Aorta (tissue), 5 donors: ENCODE measurements at regions of chr1 and their contacts with region 1.

Region 1: GRCh38 chr1:27392096-27392777 is at the start of gene GPR3:
- DNase-seq: peak; percentile 92 to 97
- ATAC-seq: peak; percentile 93
- H3K4me3 ChIP-seq: no peak within 1 kb of the TSS
- H3K27ac ChIP-seq: no peak within 1 kb of the TSS
- H3K4me1 ChIP-seq: no peaks in the 10 kb centered on the region
- H3K27me3 ChIP-seq: no peaks in the 10 kb centered on the region
- total RNA-seq, gene GPR3: 0.68 to 0.93 TPM

Region 2: DNA sequence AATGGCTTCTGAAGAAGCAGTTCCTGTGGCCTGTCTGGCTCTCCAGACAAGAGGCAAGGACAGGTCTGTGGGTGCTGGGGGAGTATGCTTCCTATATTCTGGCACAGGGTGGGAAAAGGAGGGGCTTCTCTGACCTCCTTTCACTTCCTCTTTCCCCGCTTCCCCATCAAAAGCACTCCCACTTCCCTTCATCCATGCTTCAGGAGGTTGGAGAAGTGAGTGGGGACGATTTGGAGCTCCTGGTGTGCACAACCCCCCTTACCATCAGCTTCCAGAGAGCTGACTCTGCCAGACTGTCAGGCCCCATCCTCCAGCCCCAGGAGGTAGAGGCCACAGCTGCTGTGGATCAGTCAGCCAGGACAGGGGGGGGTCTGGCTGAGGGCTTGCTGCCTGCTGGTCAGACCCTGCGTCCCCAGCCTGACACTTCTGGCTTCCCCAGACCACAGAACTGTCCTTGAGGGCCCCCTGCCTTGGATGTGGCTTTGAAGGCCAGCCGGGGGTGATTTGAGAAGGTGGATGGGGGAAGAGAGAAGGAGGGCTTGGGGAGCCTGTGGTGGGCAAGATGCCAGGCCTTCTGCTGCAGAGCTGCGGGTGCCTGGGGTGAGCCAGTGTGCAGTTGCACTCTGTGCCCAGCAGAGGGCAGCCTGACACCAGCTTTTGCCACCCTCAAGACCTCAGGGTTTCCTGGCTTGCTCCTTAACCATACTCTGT is 91.7 kb before region 1 on chr1:
- intact Hi-C with region 1: loop called (anchors 2 kb)
- DNase-seq: peak; percentile 88 to 91
- ATAC-seq: peak; percentile 93
- H3K4me3 ChIP-seq: no peak overlapping the region
- H3K27ac ChIP-seq: no peak overlapping the region
- H3K4me1 ChIP-seq: no peaks in the 10 kb centered on the region
- H3K27me3 ChIP-seq: no peaks in the 10 kb centered on the region

Region 3: DNA sequence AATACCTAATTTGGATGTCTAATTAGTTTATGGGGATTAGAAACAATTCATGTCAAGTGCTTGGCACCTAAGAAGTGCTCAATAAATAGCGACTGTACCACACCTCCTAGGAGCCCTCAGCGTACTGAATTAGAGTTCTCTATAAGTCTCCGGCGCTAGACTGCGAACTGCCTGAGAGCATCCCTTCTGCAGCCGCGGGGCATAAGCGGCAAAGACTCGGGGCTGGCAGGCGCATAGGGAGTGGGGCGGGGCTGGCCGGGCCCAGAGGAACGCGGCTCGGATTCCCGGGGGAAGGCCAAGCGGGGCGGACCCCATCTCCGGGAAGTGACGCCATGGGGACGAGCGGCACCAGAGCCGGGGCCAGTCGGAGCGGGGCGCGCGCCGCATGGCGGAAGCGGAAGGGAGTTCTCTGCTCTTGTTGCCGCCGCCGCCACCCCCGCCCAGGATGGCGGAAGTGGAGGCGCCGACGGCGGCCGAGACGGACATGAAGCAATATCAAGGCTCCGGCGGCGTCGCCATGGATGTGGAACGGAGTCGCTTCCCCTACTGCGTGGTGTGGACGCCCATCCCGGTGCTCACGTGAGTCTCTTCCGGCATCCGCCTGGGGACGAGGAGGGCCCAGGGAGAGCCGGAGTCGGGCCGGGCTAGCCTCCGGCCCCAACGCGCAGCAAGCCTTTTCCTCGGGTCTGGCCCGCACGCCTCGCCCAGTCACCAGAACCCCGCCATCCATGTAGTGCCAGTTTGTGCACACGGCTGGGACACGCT is 70.2 kb before region 1 on chr1 and contains the start of gene TMEM222:
- intact Hi-C with region 1: no loop called
- DNase-seq: peak; percentile 99 to 100
- ATAC-seq: peak; percentile 100
- H3K4me3 ChIP-seq: peak within 1 kb of the TSS; percentile 55 to 98
- H3K27ac ChIP-seq: peak within 1 kb of the TSS; percentile 28 to 50
- H3K4me1 ChIP-seq: no peaks in the 10 kb centered on the region
- H3K27me3 ChIP-seq: no peaks in the 10 kb centered on the region
- total RNA-seq, gene TMEM222: 27.4 to 32.4 TPM

Region 4: DNA sequence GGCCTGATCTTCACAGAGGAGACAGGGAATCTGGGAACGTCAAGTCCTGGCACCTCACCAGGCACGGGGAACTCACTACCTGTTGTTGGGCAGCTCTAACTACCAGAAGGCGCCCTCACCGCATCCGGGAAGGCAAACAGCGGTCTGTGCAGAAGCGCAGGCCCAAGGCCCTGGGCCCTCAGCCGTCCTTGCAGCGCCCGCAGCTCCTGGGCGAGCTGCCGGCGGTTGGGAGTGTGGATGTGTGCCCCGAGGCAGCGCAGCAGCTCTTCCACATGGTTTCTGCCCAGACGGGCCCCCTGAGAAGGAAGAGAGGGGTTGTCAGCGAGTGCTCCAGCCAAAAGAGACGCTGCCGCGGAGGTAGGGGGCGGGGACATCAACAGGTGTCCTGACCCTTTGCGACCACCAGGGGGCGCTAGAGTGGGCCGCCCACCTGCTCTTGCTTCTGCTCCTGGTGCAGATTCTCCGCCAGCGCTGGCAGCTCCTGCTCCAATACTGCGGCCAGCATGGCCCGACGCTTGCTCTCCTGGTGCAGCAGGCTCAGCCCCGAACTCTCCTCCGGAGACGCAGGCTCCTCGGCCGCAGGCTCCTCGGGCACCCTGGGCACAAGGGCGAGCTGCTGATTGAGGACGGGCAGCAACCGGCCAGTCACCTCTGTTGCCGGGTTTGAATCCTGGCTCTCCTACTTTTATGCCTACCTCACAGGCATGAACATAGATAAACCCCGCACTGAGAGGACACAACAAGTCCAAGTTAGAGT is 34.8 kb before region 1 on chr1:
- intact Hi-C with region 1: loop called (anchors 2 kb)
- DNase-seq: peak; percentile 80 to 92
- ATAC-seq: peak; percentile 85
- H3K4me3 ChIP-seq: no peak overlapping the region
- H3K27ac ChIP-seq: no peak overlapping the region
- H3K4me1 ChIP-seq: no peaks in the 10 kb centered on the region
- H3K27me3 ChIP-seq: no peaks in the 10 kb centered on the region

Region 5: GRCh38 chr1:27568300-27569087 is 176.3 kb after region 1 on chr1:
- intact Hi-C with region 1: no loop called
- DNase-seq: peak; percentile 96 to 98
- ATAC-seq: peak; percentile 87
- H3K4me3 ChIP-seq: no peak overlapping the region
- H3K27ac ChIP-seq: peak overlapping the region; percentile 70 to 88
- H3K4me1 ChIP-seq: peaks cover 0 to 3% of the 10 kb centered on the region in 2 donors
- H3K27me3 ChIP-seq: no peaks in the 10 kb centered on the region

Region 6: GRCh38 chr1:27835501-27835900 is 443.3 kb after region 1 on chr1:
- intact Hi-C with region 1: no loop called
- DNase-seq: no peak
- ATAC-seq: no peak
- H3K4me3 ChIP-seq: no peak overlapping the region
- H3K27ac ChIP-seq: no peak overlapping the region
- H3K4me1 ChIP-seq: peaks cover 0 to 12% of the 10 kb centered on the region in 2 donors
- H3K27me3 ChIP-seq: no peaks in the 10 kb centered on the region